AG04449 (cell line): ENCODE measurements at regions of chr2 and their contacts with region 1.

Region 1: DNA sequence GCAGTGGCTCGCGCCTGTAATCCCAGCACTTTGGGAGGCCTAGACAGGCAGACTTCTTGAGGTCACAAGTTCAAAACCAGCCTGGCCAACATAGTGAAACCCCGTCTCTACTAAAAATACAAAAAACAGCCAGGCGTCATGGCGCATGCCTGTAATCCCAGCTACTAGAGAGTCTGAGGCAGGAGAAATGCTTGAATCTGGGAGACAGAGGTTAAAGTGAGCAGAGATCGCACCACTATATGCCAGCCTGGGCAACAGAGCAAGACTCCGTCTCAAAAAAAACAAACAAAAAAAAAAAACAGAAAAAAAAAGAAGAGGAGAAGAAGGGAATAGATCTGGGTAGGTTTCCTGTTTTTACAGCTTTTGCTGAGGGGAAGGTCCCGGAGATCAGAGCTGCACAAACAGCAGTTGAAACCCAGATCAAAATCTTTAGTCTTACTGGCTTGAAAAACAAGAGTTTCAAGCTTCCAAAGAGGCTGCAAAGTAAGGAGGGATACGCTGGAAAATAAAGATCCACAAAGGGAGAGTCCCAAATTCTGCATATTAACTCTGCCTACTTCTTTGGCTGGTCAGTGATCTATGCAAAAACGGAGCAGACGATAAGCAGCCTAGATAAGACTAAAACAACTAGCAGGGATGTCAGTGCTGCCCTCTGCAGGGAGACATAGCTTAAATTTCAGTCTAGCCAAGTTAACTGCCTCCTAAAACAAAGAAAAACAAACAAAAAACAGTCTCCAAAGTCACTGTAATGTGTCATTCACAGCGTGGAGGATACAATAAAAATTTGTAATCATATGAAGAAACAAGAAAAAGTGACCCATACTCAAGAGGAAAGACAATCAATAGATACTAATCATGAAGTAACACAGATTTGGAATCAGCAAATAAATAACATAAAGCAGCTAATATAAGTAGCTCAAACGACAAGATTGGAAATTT is 74.1 kb downstream of the TLK1 start:
- DNase-seq: no peak
- H3K4me3 ChIP-seq: no peak overlapping the region
- CTCF ChIP-seq: peak; percentile 65

Region 2: GRCh38 chr2:171069286-171069956 is 17.2 kb before region 1 on chr2:
- CTCF ChIA-PET with region 1: interaction called, 27 read pairs
- POLR2A ChIA-PET with region 1: no interaction called
- DNase-seq: no peak
- H3K4me3 ChIP-seq: no peak overlapping the region
- CTCF ChIP-seq: no peak

Region 3: DNA sequence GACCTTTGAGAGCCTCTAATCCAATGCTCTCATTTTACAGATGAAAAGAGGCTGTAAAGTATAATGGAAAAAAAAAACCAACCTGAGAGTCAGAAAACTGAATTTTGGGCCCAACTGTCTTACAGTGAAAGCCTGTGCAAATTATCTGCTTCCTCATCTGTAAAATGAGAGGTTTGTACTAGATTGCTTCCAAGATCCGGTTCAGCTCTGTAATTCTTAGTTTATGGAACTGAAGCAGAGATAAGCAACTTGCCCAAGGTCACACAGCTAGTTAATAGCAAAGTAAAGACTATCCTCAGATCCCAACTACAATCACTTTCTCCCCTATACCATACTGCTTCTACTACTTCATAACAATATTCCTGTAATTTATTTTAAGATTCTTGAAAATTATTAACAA is 67.7 kb after region 1 on chr2:
- CTCF ChIA-PET with region 1: interaction called, 18 read pairs
- POLR2A ChIA-PET with region 1: no interaction called
- DNase-seq: no peak
- H3K4me3 ChIP-seq: no peak overlapping the region
- CTCF ChIP-seq: no peak

Region 4: GRCh38 chr2:171160119-171160955 is 73.7 kb after region 1 on chr2 and contains the start of gene TLK1:
- CTCF ChIA-PET with region 1: interaction called, 18 read pairs
- POLR2A ChIA-PET with region 1: no interaction called
- DNase-seq: no peak
- H3K4me3 ChIP-seq: peak within 1 kb of the TSS; percentile 91
- CTCF ChIP-seq: no peak